ENCODE measurements at regions of chr5 and their contacts with region 1.

Region 1: DNA sequence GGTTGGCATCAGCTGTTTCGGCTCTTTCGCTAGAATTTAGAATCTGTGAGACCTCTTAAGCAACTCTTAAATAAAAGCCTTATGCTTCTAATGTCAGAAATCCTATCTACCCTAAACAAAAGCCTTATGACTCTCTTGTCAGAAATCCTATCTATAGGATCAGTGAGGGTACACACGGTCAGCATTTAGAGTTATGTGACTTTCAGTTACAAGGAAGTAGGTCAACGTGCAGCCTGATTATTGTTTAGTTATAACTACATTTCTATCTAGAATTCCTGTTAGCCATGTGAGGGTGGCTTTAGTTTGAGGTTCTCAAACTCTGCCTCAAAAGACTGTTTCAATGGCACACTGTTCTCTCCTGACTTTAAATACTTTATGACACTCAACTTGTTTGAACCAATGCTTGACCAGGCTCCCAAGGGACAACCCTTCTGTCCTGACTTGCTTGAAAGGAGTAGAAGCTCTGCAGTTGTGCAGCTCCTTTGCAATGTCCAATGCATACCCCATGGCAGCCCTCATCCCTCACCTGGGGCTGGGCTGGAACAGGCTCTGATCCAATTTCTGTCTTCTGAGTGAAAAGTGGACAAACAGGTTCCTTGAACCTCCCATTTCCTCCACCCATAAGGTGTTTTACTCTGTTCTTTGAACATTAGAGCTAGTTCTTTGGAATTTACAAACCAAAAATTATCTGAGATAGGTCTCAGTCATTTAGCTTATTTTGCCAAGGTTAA is 251.6 kb upstream of the PIK3R1 start:
- DNase-seq: no peak
- H3K4me3 ChIP-seq: no peak overlapping the region
- H3K27ac ChIP-seq: no peak overlapping the region
- H3K4me1 ChIP-seq: no peaks in the 10 kb centered on the region
- H3K27me3 ChIP-seq: no peaks in the 10 kb centered on the region
- CTCF ChIP-seq: no peak
- EP300 ChIP-seq: no peak
- POLR2A ChIP-seq: no peak

Region 2: GRCh38 chr5:68405784-68406743 is 442.1 kb after region 1 on chr5:
- intact Hi-C with region 1: loop called in 1 of 4 experiments (anchors 2 kb)
- DNase-seq: no peak
- H3K4me3 ChIP-seq: no peak overlapping the region
- H3K27ac ChIP-seq: no peak overlapping the region
- H3K4me1 ChIP-seq: peaks cover 1% of the 10 kb centered on the region
- H3K27me3 ChIP-seq: no peaks in the 10 kb centered on the region
- CTCF ChIP-seq: no peak
- EP300 ChIP-seq: no peak
- POLR2A ChIP-seq: no peak

Measured in ovary (tissue), 10 donors.